Astrocyte of the cerebellum (primary cell): ENCODE measurements at regions of chr4 and their contacts with region 1.

Region 1: GRCh38 chr4:76430519-76431388 is 4.3 kb upstream of the SHROOM3 start:
- DNase-seq: peak; percentile 56
- H3K4me3 ChIP-seq: no peak overlapping the region
- CTCF ChIP-seq: peak; percentile 47

Region 2: GRCh38 chr4:76148142-76148865 is 282.4 kb before region 1 on chr4 and contains the start of gene NUP54:
- in situ Hi-C with region 1: no loop called
- DNase-seq: peak; percentile 91
- H3K4me3 ChIP-seq: peak within 1 kb of the TSS; percentile 89
- CTCF ChIP-seq: no peak

Region 3: GRCh38 chr4:76388160-76388908 is 42.4 kb before region 1 on chr4:
- in situ Hi-C with region 1: no loop called
- DNase-seq: no peak
- H3K4me3 ChIP-seq: no peak overlapping the region
- CTCF ChIP-seq: no peak

Region 4: GRCh38 chr4:76504613-76505465 is 74.1 kb after region 1 on chr4:
- in situ Hi-C with region 1: loop called (anchors 5 kb)
- DNase-seq: peak; percentile 59
- H3K4me3 ChIP-seq: no peak overlapping the region
- CTCF ChIP-seq: peak; percentile 40